Caco-2 (cell line): ENCODE measurements at regions of chr2 and their contacts with region 1.

Region 1: GRCh38 chr2:130332271-130333073 is 10.2 kb upstream of the IMP4 start:
- DNase-seq: peak; percentile 73 to 89
- H3K4me3 ChIP-seq: no peak overlapping the region
- H3K4me3 Mint-ChIP-seq: peak overlapping the region; percentile 39
- H3K27ac Mint-ChIP-seq: no peak overlapping the region
- H3K4me1 ChIP-seq: peaks cover 12% of the 10 kb centered on the region
- H3K4me1 Mint-ChIP-seq: no peaks in the 10 kb centered on the region
- H3K27me3 ChIP-seq: no peaks in the 10 kb centered on the region
- H3K27me3 Mint-ChIP-seq: peaks cover 6% of the 10 kb centered on the region
- CTCF ChIP-seq: peak; percentile 94 to 97

Region 2: DNA sequence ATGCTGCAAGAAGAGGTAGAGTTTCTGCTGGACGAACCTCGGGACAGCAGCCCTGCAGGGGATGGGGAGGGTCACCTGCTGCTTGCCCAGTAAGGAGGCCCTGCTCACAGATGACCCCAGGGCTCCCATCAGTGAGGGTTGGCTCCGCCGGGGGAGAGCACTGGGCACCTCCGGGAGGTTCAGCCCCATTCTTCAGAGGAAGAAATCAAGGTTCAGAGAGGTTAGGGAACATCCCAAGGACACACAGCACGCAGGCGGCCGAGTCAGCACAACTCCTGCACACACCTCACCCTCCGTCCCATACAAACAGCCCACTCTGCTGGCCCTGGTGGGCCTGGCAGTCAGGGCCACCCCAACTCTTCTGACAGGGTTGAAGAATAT is 175.9 kb before region 1 on chr2:
- CTCF ChIA-PET with region 1: interaction called, 7 read pairs
- POLR2A ChIA-PET with region 1: no interaction called
- intact Hi-C with region 1: loop called (anchors 1 kb)
- DNase-seq: no peak
- H3K4me3 ChIP-seq: no peak overlapping the region
- H3K4me3 Mint-ChIP-seq: no peak overlapping the region
- H3K27ac Mint-ChIP-seq: no peak overlapping the region
- H3K4me1 ChIP-seq: no peaks in the 10 kb centered on the region
- H3K4me1 Mint-ChIP-seq: no peaks in the 10 kb centered on the region
- H3K27me3 ChIP-seq: no peaks in the 10 kb centered on the region
- H3K27me3 Mint-ChIP-seq: no peaks in the 10 kb centered on the region
- CTCF ChIP-seq: no peak

Region 3: DNA sequence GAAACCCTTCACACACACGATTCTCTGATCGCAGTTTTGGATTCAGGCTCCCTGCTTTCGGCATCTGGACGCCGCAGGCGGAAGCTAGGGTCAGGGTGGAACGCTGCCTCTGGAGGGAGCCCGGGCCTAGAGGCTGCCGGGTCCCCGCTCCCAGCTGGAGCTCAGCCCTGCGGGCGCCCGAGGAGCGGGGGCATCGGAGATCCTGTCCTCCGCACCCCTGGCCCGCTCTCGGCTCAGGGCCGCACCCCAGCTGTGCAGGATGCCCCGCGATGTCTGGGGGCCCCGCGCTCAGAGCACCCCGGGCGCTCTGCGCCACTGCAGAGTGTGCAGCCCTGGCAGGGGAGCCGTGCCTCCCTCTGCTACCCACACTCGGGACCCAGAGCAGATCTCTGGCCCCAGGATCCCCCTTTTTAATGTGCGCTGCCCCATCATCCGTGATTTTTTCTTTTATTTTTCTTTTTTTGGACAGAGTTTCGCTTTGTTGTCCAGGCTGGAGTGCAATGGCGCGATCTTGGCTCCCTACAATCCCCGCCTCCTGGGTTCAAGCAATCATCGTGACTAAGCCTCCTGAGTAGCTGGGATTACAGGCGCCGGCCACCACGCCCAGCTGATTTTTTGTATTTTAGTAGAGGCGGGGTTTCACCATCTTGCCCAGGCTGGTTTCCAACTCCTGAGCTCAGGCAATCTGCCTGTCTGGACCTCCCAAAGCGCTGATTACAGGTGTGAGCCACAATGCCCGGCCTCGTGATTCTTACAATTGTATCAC is 79.4 kb before region 1 on chr2:
- CTCF ChIA-PET with region 1: interaction called, 10 read pairs
- POLR2A ChIA-PET with region 1: no interaction called
- intact Hi-C with region 1: loop called (anchors 1 kb)
- DNase-seq: peak in 1 of 2 experiments; percentile 64
- H3K4me3 ChIP-seq: peak overlapping the region; percentile 48
- H3K4me3 Mint-ChIP-seq: peak overlapping the region; percentile 83
- H3K27ac Mint-ChIP-seq: peak overlapping the region; percentile 48
- H3K4me1 ChIP-seq: no peaks in the 10 kb centered on the region
- H3K4me1 Mint-ChIP-seq: no peaks in the 10 kb centered on the region
- H3K27me3 ChIP-seq: no peaks in the 10 kb centered on the region; the same call in 1 of the 2 replicates
- H3K27me3 Mint-ChIP-seq: peaks cover 11% of the 10 kb centered on the region
- CTCF ChIP-seq: peak; percentile 15 to 40

Region 4: DNA sequence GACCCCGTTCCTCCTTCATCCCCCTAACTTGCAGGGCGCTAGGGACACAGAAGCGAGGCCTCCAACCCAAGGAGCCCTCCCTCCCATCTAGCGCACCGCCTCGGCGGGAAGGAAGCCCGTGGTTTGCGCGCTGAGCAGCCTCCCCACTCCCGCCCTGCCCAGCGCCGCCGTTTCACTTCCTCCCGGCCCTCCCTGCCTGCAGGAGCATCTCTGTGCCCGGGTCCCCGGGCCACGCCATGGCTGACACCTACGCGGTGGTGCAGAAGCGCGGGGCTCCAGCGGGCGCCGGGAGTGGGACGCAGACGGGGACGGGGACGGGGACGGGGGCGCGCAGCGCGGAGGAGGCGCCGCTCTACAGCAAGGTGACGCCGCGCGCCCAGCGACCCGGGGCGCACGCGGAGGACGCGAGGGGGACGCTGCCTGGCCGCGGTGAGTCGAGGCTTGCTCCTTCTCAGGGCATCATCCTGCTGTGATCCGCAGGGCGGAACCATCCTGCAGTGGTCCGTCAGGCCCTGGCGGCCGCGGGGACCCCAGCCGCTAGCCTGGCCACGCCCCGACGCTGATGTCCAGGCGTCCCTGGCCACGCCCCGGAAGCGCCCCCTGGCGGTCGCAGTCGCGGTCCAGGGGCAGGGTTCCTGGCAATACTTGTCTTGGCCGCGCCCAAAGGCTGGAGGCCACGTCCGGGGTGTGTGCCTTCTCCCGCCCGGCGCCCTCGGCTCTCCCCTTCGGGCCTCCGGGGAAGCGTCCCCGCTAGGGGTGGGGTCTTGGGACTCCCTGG is 39.8 kb after region 1 on chr2:
- CTCF ChIA-PET with region 1: no interaction called
- POLR2A ChIA-PET with region 1: no interaction called
- intact Hi-C with region 1: no loop called
- DNase-seq: peak; percentile 93 to 98
- H3K4me3 ChIP-seq: peak overlapping the region; percentile 92
- H3K4me3 Mint-ChIP-seq: peak overlapping the region; percentile 98
- H3K27ac Mint-ChIP-seq: peak overlapping the region; percentile 91
- H3K4me1 ChIP-seq: peaks cover 6% of the 10 kb centered on the region
- H3K4me1 Mint-ChIP-seq: peaks cover 23% of the 10 kb centered on the region
- H3K27me3 ChIP-seq: no peaks in the 10 kb centered on the region
- H3K27me3 Mint-ChIP-seq: no peaks in the 10 kb centered on the region
- CTCF ChIP-seq: peak; percentile 93 to 95